Activated CD4-positive, alpha-beta T cell treated with anti-CD3 and anti-CD28 coated beads for 36 hours (primary cell): ENCODE measurements at regions of chr9 and their contacts with region 1.

Region 1: GRCh38 chr9:34328987-34329832 is at the starts of genes KIF24 and NUDT2:
- DNase-seq: peak; percentile 98
- ATAC-seq: peak; percentile 97
- H3K4me3 Mint-ChIP-seq: peak within 1 kb of the TSS; percentile 95
- H3K27ac Mint-ChIP-seq: peak within 1 kb of the TSS; percentile 98
- H3K4me1 Mint-ChIP-seq: peaks cover 32% of the 10 kb centered on the region
- H3K27me3 Mint-ChIP-seq: no peaks in the 10 kb centered on the region
- total RNA-seq, gene KIF24: 5.9 to 7.7 TPM
- total RNA-seq, gene NUDT2: 14.9 to 22.9 TPM

Region 2: DNA sequence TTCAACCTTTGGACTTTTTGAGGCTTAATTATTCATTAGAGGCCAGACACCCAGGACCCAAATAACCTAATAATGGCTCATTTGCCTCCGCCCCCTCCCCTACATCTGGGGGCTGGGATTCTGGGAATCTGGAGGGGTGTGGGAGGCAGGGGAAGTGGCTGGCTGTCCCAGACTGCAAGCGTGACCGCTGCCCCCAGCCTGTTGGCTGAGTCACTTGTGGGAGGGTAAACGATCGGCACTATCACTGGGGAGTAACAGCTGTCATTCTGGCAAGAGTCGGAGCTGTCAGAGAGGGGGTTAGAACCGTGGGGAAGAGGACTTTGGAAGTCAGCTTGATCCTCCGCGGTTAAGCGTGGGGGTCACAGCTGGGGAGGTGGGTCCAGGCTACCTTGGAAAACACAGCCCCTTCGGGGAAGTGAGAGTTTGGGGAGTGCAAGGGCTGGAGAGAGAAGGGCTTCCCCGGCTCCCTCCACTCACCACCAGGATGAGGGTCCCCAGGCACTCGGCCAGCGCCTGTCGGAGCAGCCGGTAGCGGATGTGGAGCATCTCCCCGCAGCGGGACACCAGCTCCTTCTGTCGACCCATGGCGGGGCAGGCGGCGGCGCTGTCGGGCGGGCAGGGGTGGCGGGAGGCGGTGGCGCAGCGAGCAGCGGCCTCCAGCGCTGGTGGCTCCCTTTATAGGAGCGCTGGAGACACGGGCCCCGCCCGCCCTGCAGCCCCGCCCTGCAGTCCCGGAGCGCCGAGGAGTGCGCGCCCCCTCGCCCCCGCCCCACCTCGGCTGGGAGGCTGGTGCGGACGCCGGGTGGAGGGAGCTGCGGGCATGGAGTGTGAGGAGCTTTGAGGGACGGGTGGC is 882.0 kb before region 1 on chr9 and contains the start of gene AQP3:
- CTCF ChIA-PET with region 1: no interaction called
- POLR2A ChIA-PET with region 1: no interaction called
- intact Hi-C with region 1: loop called in 1 of 2 experiments (anchors 1 kb)
- DNase-seq: peak; percentile 85
- ATAC-seq: peak; percentile 68
- H3K4me3 Mint-ChIP-seq: peak within 1 kb of the TSS; percentile 79
- H3K27ac Mint-ChIP-seq: peak within 1 kb of the TSS; percentile 93
- H3K4me1 Mint-ChIP-seq: peaks cover 43% of the 10 kb centered on the region
- H3K27me3 Mint-ChIP-seq: no peaks in the 10 kb centered on the region
- total RNA-seq, gene AQP3: 8.5 to 11.3 TPM

Region 3: DNA sequence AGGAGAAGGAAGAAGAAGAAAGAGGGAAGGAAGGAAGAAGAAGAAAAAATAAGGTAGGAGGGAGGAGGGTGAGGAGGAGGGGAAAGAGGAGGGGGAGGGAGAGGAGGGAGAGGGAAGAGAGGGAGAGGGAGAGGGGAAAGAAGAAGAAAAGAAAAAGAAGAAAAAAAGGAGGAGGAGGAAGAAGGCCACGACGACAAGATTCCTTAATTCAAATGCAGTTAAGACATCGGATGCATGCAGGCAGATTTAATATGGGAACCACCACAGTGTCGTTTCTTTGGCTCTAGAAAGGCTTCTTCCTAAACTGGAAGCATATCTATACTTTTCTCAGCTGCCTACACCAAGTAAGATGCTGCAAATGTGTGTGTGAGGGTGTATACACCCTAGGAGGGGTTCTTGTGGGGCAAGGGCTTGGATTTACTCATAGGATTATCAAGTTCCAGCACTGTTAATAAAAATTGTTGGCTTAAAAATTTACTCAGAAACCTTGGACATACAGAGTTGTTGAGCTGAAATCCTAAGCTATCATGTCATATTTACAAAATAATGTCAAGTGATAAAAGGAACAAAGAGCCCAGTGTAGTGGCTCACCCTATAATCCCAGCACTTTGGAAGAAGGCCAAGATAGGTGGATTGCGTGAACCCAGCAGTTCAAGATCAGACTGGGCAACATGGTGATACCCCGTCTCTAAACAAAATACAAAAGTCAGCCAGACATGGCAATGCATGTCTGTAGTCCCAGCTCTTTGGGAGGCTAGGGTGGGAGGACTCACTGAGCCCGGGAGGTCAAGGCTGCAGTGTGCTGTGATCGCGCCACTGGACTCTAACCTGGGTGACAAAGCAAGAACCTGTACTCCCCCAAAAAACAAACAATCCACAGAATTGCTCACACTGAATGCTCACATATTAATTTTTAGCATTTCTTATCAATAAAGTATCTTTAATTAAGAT is 389.0 kb before region 1 on chr9:
- CTCF ChIA-PET with region 1: no interaction called
- POLR2A ChIA-PET with region 1: no interaction called
- intact Hi-C with region 1: no loop called
- DNase-seq: no peak
- ATAC-seq: no peak
- H3K4me3 Mint-ChIP-seq: no peak overlapping the region
- H3K27ac Mint-ChIP-seq: no peak overlapping the region
- H3K4me1 Mint-ChIP-seq: no peaks in the 10 kb centered on the region
- H3K27me3 Mint-ChIP-seq: no peaks in the 10 kb centered on the region

Region 4: GRCh38 chr9:34178520-34179212 is 150.5 kb before region 1 on chr9 and contains the start of gene UBAP1:
- CTCF ChIA-PET with region 1: no interaction called
- POLR2A ChIA-PET with region 1: no interaction called
- intact Hi-C with region 1: loop called in 1 of 2 experiments (anchors 1 kb)
- DNase-seq: peak; percentile 98
- ATAC-seq: peak; percentile 97
- H3K4me3 Mint-ChIP-seq: peak within 1 kb of the TSS; percentile 93
- H3K27ac Mint-ChIP-seq: peak within 1 kb of the TSS; percentile 96
- H3K4me1 Mint-ChIP-seq: peaks cover 20% of the 10 kb centered on the region
- H3K27me3 Mint-ChIP-seq: no peaks in the 10 kb centered on the region
- total RNA-seq, gene UBAP1: 29.5 to 43.3 TPM

Region 5: GRCh38 chr9:34500623-34501267 is 171.5 kb after region 1 on chr9:
- CTCF ChIA-PET with region 1: interaction called, 3 read pairs
- POLR2A ChIA-PET with region 1: no interaction called
- intact Hi-C with region 1: loop called in 1 of 2 experiments (anchors 2 kb)
- DNase-seq: peak; percentile 90
- ATAC-seq: peak; percentile 99
- H3K4me3 Mint-ChIP-seq: no peak overlapping the region
- H3K27ac Mint-ChIP-seq: no peak overlapping the region
- H3K4me1 Mint-ChIP-seq: peaks cover 14% of the 10 kb centered on the region
- H3K27me3 Mint-ChIP-seq: peaks cover 9% of the 10 kb centered on the region

Region 6: DNA sequence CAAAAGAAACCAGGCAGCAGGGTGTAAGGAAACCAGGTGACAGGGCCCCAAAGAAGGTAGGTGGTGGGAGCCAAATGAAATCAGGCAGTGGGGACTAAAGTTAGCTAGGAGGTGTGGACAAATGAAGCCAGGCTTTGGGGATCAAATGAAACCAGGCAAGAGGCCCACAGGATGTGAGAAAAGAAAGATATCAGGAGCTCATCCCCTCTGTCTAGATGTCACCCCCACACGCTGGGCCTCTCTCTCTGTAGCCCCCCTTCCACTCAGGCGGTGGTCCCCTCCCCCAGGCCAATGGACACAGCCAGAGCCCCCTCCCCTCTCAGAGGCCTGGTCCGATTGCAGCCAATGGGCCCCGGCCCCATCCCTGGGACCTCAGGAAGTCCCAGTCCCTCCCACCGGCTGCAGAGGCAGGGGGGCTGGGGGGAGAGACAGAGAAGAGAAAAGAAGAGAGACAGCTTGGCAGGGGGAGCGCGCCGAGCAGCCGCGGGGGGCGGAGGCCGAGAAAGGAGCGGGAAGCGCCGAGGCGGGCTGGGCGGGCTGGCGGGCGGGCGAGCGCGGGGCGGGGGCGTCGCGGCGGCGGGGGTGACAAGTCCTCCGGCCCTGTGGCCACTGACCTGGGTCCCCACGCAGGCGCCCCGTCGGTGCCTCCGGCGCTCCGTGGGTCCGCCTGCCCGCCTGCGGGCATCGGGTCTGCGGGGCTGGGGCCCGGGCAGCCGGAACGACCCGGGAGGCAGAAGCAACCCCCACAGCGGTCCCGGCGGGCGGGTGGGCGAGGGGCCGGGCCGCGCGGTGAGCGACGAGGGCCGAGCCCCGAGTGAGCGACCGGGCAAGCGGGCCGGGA is 248.4 kb after region 1 on chr9:
- CTCF ChIA-PET with region 1: no interaction called
- POLR2A ChIA-PET with region 1: no interaction called
- intact Hi-C with region 1: no loop called
- DNase-seq: no peak
- ATAC-seq: peak; percentile 12
- H3K4me3 Mint-ChIP-seq: no peak overlapping the region
- H3K27ac Mint-ChIP-seq: no peak overlapping the region
- H3K4me1 Mint-ChIP-seq: peaks cover 9% of the 10 kb centered on the region
- H3K27me3 Mint-ChIP-seq: peaks cover 48% of the 10 kb centered on the region

Region 7: DNA sequence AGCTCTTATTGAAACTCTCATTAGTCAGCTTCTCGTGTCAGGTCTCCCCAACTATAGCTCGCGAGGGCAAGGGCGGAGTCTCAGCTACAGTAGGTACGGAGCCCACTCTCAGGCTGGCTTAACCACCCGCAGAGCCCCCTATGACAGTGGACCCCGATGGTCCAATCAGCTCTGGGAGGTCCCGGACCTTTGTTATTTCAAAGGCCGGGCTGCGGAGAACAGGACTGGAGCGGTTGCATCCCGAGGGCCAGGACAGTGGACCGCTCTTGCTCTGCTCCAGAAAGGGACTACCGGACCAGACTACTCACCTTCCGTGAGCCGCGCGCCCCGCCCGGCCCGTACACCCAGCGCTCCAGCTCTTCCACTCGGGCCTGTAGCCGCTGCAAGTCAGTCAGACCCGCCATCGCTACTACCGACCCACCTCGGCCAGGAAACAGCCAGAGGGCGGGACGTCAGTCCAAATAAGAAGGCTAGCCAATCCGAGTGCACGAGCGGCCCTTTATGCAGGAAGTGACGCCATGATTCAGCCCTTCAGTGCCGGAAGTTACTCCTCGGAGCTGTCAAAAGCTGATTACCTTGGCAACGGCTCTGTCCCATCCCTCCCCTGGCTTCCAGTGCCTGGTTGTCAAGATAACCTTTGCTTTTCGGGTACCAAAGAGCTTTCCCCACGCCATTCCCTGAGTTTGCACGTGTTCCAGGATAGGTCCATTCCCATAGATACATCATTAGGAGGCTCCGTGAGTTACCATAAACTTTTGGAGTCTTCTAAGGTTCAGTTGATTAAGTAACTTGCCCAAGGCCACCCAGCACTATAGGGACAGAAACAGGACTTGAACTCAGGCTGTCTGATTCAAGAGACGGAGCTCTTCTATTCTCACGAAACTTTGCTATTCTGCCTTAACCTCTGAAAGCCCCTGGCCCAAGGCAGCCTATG is 291.1 kb after region 1 on chr9 and contains the start of gene DCTN3:
- CTCF ChIA-PET with region 1: no interaction called
- POLR2A ChIA-PET with region 1: no interaction called
- intact Hi-C with region 1: loop called in 1 of 2 experiments (anchors 1 kb)
- DNase-seq: peak; percentile 95
- ATAC-seq: peak; percentile 99
- H3K4me3 Mint-ChIP-seq: peak within 1 kb of the TSS; percentile 88
- H3K27ac Mint-ChIP-seq: peak within 1 kb of the TSS; percentile 77
- H3K4me1 Mint-ChIP-seq: peaks cover 25% of the 10 kb centered on the region
- H3K27me3 Mint-ChIP-seq: peaks cover 25% of the 10 kb centered on the region
- total RNA-seq, gene DCTN3: 65.9 to 68.4 TPM